ENCODE measurements at regions of chr9 and their contacts with region 1.

Region 1: DNA sequence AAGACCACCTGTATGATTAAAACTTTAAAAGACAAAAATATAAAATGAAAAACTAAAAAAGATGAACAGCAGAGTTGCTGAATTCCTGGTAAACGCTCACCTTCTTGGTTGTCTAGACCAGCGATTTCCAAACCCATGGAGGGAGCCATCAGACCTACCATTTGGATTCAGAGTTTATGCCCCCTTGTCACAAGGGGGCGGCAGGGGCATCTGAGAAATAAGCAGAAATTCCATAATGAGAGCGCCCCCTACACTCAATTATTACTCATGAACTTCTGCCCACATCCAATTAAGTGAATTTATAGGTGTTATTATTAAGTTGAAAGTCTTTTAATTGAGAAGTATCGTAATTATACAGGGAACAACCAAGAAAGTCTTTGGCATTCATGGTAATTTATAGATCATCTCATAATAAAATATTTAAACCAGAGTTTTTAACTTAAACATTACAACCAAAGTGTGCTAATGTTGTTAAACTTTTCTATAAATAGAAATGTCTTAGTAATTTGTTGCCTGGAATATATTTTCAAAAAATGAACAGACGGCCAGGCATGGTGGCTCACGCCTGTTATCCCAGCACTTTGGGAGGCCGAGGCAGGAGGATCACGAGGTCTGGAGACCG is 35.2 kb upstream of the SPATA31C2 start:
- DNase-seq: peak; percentile 79
- ATAC-seq: 0 out of 2 replicates have a peak, but pooled peaks have one; percentile 29
- H3K4me3 ChIP-seq: no peak overlapping the region
- H3K27ac ChIP-seq: no peak overlapping the region
- H3K4me1 ChIP-seq: no peaks in the 10 kb centered on the region
- H3K27me3 ChIP-seq: no peaks in the 10 kb centered on the region
- CTCF ChIP-seq: peak; percentile 97

Region 2: GRCh38 chr9:88197781-88198340 is 24.4 kb after region 1 on chr9:
- CTCF ChIA-PET with region 1: interaction called, 3 read pairs
- POLR2A ChIA-PET with region 1: interaction called, 27 read pairs
- intact Hi-C with region 1: no loop called
- DNase-seq: peak; percentile 81
- ATAC-seq: peak; percentile 76
- H3K4me3 ChIP-seq: peak overlapping the region; percentile 54
- H3K27ac ChIP-seq: peak overlapping the region; percentile 74
- H3K4me1 ChIP-seq: peaks cover 37% of the 10 kb centered on the region
- H3K27me3 ChIP-seq: no peaks in the 10 kb centered on the region
- CTCF ChIP-seq: no peak

Region 3: DNA sequence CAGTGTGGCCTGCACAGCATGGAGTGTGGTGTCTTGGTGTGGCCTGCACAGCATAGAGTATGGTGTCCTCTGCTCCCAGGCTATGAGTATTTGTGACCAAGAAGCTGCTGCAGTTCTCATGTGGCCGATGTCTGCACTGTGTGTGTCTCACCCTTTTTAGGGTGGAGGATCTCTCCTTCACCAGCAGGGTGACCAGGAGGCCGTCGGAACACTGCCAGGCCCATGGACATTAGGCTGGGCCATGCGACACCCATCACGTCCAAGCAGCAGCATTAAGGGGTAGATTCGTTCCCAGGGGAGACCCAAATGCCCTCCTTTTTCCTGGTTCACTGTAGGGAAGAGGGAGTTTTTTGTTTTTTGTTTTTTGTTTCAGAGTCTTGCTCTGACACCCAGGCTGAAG is 99.5 kb after region 1 on chr9:
- CTCF ChIA-PET with region 1: no interaction called
- POLR2A ChIA-PET with region 1: no interaction called
- intact Hi-C with region 1: loop called (anchors 5 kb)
- DNase-seq: no peak
- ATAC-seq: no peak
- H3K4me3 ChIP-seq: no peak overlapping the region
- H3K27ac ChIP-seq: no peak overlapping the region
- H3K4me1 ChIP-seq: peaks cover 22% of the 10 kb centered on the region
- H3K27me3 ChIP-seq: no peaks in the 10 kb centered on the region
- CTCF ChIP-seq: no peak

Region 4: GRCh38 chr9:88388172-88388885 is 214.8 kb after region 1 on chr9 and contains the start of gene SPIN1:
- CTCF ChIA-PET with region 1: no interaction called
- POLR2A ChIA-PET with region 1: no interaction called
- intact Hi-C with region 1: loop called (anchors 1 kb)
- DNase-seq: peak; percentile 76
- ATAC-seq: peak; percentile 86
- H3K4me3 ChIP-seq: peak within 1 kb of the TSS; percentile 98
- H3K27ac ChIP-seq: peak within 1 kb of the TSS; percentile 84
- H3K4me1 ChIP-seq: peaks cover 11% of the 10 kb centered on the region
- H3K27me3 ChIP-seq: no peaks in the 10 kb centered on the region
- CTCF ChIP-seq: no peak
- total RNA-seq, gene SPIN1: 37.9 and 46.2 TPM in 2 replicates

Region 5: DNA sequence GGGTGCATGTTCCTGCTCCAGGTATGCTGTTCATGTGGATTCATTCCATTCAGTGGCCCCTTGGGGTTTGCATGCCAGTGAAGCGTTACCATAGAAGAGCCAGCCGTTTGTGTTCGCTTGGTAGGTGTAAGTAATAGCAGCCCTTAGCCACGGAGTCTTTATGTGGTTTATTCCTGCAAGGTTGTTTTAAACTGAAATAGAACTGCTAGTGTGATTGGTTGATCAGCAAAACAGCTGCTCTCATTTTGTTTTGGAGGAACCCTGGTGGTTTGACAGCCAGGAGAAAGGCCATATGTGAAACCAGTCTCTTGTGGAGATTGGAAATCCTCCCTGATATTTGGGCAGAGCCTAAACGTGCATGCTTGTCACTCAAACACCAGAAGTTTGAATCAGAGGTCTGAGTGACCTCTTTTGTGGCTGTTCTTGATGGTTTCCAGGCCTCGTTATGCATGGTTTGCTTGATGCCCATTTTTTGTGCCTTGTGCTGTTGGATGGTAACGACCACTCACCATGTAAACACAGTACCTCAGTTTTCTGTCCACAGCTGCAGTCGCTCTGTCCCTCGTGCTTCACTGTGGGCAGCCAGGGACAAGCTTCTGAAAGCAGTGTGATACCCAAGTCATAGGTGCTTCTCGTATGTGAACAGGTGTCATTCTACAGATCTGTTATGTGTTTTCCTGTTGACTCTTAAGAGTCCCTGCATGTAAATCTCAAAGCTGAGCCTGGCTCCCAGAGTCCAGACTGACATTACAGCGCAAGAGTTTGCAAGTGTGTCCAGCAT is 303.2 kb after region 1 on chr9:
- CTCF ChIA-PET with region 1: no interaction called
- POLR2A ChIA-PET with region 1: no interaction called
- intact Hi-C with region 1: loop called (anchors 5 kb)
- DNase-seq: peak; percentile 6
- ATAC-seq: no peak; the same call in 1 of the 2 replicates
- H3K4me3 ChIP-seq: peak overlapping the region; percentile 27; the same call in 1 of the 2 replicates
- H3K27ac ChIP-seq: peak overlapping the region; percentile 95
- H3K4me1 ChIP-seq: peaks cover 52% of the 10 kb centered on the region
- H3K27me3 ChIP-seq: no peaks in the 10 kb centered on the region
- CTCF ChIP-seq: no peak

Region 6: DNA sequence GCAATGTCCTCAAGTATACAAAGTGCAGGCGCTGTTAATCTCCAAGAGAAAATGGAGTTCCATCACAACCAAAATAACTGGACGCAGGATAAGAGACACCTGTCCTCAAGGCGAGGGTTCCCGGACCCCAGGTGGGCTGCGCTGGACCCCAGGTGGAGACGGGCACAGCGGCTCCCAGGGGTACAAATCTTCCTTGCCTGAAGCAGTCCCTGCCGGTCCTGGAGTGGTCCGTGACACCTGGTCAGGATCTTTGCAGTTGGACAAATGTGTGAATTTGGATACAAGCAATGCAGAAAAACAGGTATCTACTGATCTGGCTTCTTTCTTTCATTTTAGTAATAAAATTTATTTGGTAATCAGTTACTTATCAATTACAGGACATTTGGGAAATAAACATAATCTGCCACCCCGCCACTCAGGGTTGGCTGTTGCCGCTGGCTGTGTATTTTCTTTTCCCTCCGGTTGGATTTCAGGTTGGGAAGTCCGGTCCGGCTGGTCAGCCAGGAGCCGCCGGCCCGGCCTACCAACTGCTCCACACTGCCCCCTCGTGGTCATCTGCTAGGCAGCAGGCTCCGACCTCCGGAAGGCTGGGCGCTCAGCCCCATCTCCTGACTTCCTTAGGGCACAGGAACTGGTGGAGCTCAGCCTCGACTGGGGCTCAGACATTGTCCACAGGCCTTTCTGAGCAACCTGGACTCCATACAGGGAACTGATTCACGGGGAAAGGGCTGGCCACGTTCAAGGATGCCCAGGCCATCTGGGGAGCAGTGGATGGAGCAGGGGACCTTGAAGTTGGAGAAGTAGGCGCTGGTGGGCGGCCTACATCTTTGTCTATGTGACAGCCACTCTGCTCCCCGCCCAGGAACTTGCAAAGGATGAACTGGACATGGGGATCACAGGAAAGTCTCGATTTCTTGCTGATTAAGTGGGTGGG is 404.9 kb after region 1 on chr9:
- CTCF ChIA-PET with region 1: no interaction called
- POLR2A ChIA-PET with region 1: no interaction called
- intact Hi-C with region 1: loop called (anchors 2 kb)
- DNase-seq: peak; percentile 81
- ATAC-seq: peak; percentile 95
- H3K4me3 ChIP-seq: peak overlapping the region; percentile 13; the same call in 1 of the 2 replicates
- H3K27ac ChIP-seq: no peak overlapping the region
- H3K4me1 ChIP-seq: 0 out of 2 replicates have a peak, but pooled peaks cover 3% of the 10 kb centered on the region
- H3K27me3 ChIP-seq: no peaks in the 10 kb centered on the region
- CTCF ChIP-seq: peak; percentile 87

Measured in PC-3 (cell line).